ENCODE measurements at regions of chr11 and their contacts with region 1.

Region 1: DNA sequence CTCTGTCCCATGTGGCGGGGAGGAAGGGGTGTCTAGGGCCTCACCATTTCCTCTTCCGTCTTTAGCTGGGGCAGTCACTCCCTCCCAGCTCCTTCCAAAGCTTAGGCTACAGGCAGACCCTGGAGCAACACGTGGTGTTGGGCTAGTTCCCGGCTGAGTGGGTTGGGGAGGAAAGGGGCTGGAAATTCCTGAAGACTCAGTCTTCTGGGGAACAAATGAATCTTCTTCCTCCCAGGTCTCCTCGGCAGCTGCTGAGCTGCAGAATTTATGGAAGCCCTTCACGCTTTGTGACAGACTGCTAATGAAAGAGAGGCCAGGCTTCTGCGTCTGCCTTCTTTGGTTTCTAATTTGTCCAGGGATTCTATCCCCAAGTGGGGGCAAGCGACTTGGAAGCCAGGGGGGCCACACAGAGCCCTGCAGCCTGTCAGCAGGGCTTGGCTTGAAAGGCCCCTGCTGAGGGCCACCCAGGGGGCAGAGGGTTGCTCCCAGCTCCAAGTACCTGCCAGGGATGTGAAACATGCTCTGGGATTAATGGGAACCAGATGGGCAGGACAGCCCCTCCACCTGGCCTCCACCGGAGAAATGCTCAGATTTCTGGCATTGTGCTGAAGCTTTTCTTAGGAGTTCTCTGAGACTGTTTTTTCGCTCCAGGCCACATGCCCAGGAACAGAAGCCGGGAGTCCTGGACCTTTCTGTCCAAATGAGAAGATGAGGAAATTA is 123.1 kb downstream of the PKNOX2 start:
- DNase-seq: no peak
- H3K4me3 ChIP-seq: no peak overlapping the region
- H3K27ac ChIP-seq: no peak overlapping the region
- H3K4me1 ChIP-seq: peaks cover 0 to 9% (median 4%) of the 10 kb centered on the region in 4 experiments; a peak in 3 of 7 replicates
- H3K27me3 ChIP-seq: peaks cover 0 to 2% (median 0%) of the 10 kb centered on the region in 4 experiments; a peak in 2 of 7 replicates
- CTCF ChIP-seq: no peak
- EP300 ChIP-seq: no peak
- POLR2A ChIP-seq: no peak
- RAD21 ChIP-seq: no peak

Region 2: DNA sequence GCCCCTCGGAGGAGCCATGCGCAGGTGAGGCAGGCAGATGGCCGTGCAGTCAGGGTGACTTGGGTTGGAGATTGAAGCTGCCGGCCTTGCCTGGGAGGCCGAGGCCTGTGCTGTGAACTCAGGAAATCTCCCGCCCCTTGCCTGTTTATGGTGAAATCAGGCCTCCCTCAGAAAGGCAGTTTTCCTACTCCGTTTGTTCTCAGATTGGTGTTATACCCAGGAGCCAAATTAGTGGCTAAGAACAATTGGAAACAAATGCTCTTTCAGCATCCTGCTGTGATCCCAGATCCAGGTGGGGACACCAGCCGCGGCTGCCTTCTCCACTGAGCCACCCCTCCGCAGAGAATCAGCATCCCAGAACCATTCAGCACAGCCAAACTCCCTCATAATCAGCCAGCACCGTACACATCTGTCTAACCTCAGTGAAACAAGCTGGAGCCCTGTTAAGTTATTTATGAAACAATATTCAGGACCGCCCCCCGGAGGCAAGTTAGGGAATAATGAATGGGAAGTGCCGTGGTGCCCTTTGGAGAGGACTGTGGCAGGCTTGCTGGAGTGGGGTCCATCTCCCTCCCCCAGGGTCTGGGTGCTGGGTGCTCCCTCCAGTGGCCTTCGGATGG is 63.1 kb before region 1 on chr11:
- CTCF ChIA-PET with region 1: no interaction called
- POLR2A ChIA-PET with region 1: no interaction called
- DNase-seq: no peak
- H3K4me3 ChIP-seq: no peak overlapping the region
- H3K27ac ChIP-seq: peak overlapping the region; percentile 17; the same call in 1 of the 2 replicates
- H3K4me1 ChIP-seq: peaks cover 7 to 26% (median 18%) of the 10 kb centered on the region in 4 experiments
- H3K27me3 ChIP-seq: no peaks in the 10 kb centered on the region; a peak in 1 of 7 replicates
- CTCF ChIP-seq: peak; percentile 27 to 40 (median 34); a peak in 3 of 4 replicates
- EP300 ChIP-seq: no peak
- POLR2A ChIP-seq: no peak
- RAD21 ChIP-seq: peak; percentile 40 to 48

Region 3: DNA sequence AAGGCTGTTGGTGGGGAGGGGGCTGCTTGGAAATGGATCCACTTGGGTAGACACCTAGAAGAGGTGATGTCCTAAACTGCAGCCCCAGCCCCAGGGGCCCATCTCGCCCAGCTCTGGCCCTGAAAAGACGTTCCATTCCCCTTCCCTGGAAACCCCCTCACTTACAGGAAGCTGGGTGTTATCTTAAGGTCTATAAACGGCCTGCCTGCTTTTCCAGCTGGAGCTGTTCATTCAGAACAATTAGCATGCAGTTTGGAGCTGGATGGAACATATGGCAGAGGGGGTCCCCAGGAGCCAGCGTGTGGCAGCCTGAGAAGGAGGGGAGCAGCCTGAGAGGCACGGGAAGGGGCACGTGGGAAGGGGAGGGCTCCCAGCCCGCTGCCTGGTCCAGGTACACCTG is 16.5 kb after region 1 on chr11:
- CTCF ChIA-PET with region 1: interaction called, 12 read pairs
- POLR2A ChIA-PET with region 1: interaction called, 4 read pairs
- DNase-seq: no peak
- H3K4me3 ChIP-seq: no peak overlapping the region
- H3K27ac ChIP-seq: no peak overlapping the region
- H3K4me1 ChIP-seq: no peaks in the 10 kb centered on the region; a peak in 1 of 7 replicates
- H3K27me3 ChIP-seq: 0 out of 7 replicates have a peak, but pooled peaks cover 0 to 2% (median 0%) of the 10 kb centered on the region in 4 experiments
- CTCF ChIP-seq: no peak
- EP300 ChIP-seq: no peak
- POLR2A ChIP-seq: no peak
- RAD21 ChIP-seq: no peak